A673 (cell line): ENCODE measurements at regions of chr7 and their contacts with region 1.

Region 1: DNA sequence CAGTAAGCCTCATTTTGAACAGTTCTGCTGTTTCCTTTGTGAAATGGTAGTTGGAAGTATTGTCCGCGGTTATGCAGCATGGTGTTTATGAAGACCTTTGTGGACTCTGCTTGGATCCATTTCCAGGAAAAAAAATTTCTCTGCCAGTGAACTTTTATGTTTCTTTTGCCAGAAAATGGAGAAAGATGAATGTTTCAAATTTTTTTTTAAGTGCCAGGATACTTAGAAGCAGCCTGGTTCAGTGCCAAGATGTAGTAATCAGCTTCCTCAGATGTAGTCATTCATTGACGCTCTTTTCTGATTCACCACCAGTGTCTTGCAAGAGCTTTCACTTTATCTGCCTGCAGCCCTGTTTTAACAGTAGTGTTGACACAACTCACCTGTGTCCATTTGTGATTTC is 258.2 kb downstream of the SDK1 start:
- DNase-seq: peak; percentile 53
- H3K4me3 ChIP-seq: peak overlapping the region; percentile 12
- H3K27ac ChIP-seq: no peak overlapping the region
- H3K4me1 ChIP-seq: peaks cover 14% of the 10 kb centered on the region
- H3K27me3 ChIP-seq: no peaks in the 10 kb centered on the region
- CTCF ChIP-seq: no peak

Region 2: GRCh38 chr7:3533040-3533439 is 26.2 kb before region 1 on chr7:
- CTCF ChIA-PET with region 1: no interaction called
- POLR2A ChIA-PET with region 1: no interaction called
- intact Hi-C with region 1: no loop called
- DNase-seq: no peak
- H3K4me3 ChIP-seq: no peak overlapping the region
- H3K27ac ChIP-seq: no peak overlapping the region
- H3K4me1 ChIP-seq: no peaks in the 10 kb centered on the region
- H3K27me3 ChIP-seq: no peaks in the 10 kb centered on the region
- CTCF ChIP-seq: no peak

Region 3: DNA sequence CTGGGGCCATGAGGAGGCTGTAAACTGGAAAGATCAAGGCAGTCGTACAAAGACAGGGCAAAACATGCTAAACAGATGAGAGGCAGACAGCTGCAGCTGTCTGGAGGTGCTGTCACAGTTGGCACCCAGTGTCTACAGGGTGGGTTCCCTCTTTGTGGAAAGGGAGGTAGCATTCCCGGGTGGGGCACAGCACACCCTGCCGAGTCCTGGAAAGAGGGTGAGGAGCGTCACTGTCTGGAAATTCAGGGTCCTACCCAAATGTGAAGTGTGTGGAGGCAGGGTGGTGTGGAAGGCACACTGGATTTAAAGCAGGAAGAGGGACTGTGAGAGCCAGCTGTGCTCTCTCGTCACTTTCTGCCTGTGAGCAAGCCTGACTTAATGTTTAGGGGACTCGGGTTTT is 97.9 kb after region 1 on chr7:
- CTCF ChIA-PET with region 1: no interaction called
- POLR2A ChIA-PET with region 1: interaction called, 12 read pairs
- intact Hi-C with region 1: no loop called
- DNase-seq: no peak
- H3K4me3 ChIP-seq: no peak overlapping the region
- H3K27ac ChIP-seq: no peak overlapping the region
- H3K4me1 ChIP-seq: no peaks in the 10 kb centered on the region
- H3K27me3 ChIP-seq: peaks cover 4% of the 10 kb centered on the region
- CTCF ChIP-seq: no peak